Heart left ventricle (tissue), 16 donors: ENCODE measurements at regions of chr6 and their contacts with region 1.

Region 1: DNA sequence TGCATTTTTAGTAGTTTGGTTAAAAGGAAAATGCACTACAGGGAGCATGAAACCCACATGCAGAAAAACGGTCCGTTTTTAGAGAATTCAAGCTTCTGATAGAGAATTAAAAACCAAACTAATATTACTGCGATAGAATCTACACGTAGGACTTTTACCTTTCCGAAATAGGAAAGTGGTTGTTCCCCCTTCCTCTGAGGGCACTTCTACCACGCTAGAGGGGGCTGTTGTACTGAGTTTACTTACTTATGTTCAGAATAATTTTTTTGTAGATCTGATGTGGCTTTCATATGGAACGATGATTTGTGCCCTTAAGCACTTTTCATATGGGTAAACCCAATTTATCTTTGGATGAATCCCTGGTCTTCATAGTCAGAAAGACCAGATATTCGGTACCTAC is 264.3 kb upstream of the PLN start:
- DNase-seq: peak in 4 of 5 donors; percentile 30 to 50 (median 45)
- ATAC-seq: peak in 3 of 4 donors; percentile 46 to 68 (median 63)
- H3K4me3 ChIP-seq: peak overlapping the region in 2 of 12 donors; percentile 8 to 13
- H3K27ac ChIP-seq: peak overlapping the region in 3 of 12 donors; percentile 4 to 84 (median 77)
- H3K4me1 ChIP-seq: peaks cover 0 to 38% (median 8%) of the 10 kb centered on the region in 12 donors
- H3K27me3 ChIP-seq: no peaks in the 10 kb centered on the region
- CTCF ChIP-seq: peak; percentile 59 to 92 (median 82)
- POLR2A ChIP-seq: no peak

Region 2: DNA sequence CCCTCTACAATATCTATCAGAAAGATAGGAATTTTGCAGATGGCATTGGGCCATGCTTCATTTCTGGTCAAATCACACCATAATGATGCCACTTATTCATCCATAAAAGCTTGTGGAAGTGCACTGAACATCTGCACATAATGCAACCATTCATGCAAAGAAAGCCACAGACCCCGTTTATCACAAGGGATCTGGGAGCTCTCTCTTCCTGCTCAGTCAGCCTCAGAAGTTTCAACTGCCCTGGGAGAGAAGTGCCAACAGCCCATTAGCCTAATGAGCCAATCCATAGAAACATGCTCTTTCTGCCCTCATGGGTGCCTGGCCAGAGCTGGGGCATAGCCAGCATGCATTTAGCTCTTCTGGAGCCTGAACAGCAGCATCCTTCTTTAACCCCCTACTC is 290.9 kb before region 1 on chr6:
- intact Hi-C with region 1: no loop called
- DNase-seq: no peak
- ATAC-seq: no peak
- H3K4me3 ChIP-seq: no peak overlapping the region
- H3K27ac ChIP-seq: no peak overlapping the region
- H3K4me1 ChIP-seq: no peaks in the 10 kb centered on the region
- H3K27me3 ChIP-seq: no peaks in the 10 kb centered on the region
- CTCF ChIP-seq: no peak
- POLR2A ChIP-seq: no peak

Region 3: DNA sequence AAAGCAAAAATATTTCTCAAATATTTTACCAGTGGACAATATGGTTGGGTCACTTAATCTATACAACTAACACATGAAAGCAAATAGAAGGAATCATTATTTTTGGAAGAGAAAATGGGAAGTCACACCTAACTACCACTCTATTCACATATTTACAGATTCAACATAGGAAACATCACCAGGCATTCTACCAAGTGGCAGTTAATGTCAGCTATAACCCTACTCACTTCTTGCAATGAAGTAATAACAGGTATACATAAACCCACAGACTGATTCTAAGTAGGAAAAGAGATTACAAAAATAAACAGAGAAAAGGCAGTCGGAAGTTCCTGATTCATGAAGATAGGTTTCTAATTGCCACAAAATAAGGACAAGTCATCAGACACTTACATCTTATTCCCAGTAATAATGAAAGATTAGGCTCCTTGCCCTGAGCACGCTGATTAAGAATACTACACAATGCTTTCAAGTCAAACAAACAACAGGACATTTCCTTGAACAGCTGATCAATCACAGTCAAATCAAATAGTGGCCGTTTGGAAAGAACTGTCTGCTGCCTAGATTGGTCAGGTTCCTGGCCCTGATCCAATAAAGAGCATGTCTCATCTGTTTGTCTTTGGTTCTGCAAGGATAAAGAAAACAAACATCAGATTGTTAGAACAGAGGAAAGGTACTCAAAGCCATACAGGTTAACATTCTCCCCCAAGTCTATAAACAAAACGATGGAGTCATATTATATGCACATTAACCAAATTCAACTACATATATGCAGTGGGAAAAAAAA is 185.1 kb after region 1 on chr6:
- intact Hi-C with region 1: loop called in 1 of 10 experiments (anchors 5 kb)
- DNase-seq: no peak
- ATAC-seq: no peak
- H3K4me3 ChIP-seq: no peak overlapping the region
- H3K27ac ChIP-seq: no peak overlapping the region
- H3K4me1 ChIP-seq: peaks cover 0 to 31% (median 0%) of the 10 kb centered on the region in 12 donors
- H3K27me3 ChIP-seq: no peaks in the 10 kb centered on the region
- CTCF ChIP-seq: no peak
- POLR2A ChIP-seq: no peak

Region 4: GRCh38 chr6:118551063-118552053 is 267.6 kb after region 1 on chr6:
- intact Hi-C with region 1: loop called in 9 of 10 experiments (anchors 2 to 10 kb)
- DNase-seq: no peak
- ATAC-seq: peak; percentile 41 to 64 (median 64)
- H3K4me3 ChIP-seq: peak overlapping the region; percentile 27 to 64 (median 54)
- H3K27ac ChIP-seq: peak overlapping the region; percentile 27 to 87 (median 78)
- H3K4me1 ChIP-seq: peaks cover 0 to 14% (median 0%) of the 10 kb centered on the region in 12 donors
- H3K27me3 ChIP-seq: no peaks in the 10 kb centered on the region
- CTCF ChIP-seq: peak; percentile 31 to 77 (median 58)
- POLR2A ChIP-seq: no peak

Region 5: DNA sequence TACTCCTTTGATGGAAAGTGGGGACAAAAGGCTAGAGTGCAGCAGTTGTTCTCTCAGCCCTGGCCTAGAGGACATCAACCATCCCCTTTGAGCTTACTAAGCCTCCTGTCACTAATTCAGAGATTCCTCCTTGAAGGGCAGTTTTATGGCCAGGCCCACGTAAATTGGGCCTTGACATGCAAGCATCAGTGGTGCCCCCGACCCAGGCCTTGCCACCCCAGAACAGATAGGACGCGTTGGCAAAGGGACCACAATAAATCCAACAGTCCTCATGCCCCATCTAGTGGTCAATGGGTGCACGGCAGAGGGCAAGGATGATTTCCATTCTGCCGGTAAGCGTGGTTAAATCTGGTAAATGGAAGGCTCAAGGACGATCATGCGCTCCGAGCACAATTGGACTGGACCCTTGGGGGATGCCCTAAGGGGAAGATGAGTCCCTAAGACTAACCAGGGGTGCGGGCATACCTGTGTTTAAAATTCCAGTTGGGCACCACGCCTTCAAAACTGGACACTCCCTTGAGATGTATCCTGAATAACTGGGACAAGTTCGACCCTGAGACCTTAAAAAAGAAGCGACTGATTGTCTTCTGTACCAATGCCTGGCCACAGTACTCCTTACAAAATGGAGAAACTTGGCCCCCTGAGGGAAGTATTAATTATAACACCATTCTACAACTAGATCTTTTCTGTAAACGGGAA is 335.1 kb after region 1 on chr6:
- intact Hi-C with region 1: loop called in 8 of 10 experiments (anchors 2 to 5 kb)
- DNase-seq: peak in 4 of 5 donors; percentile 33 to 55 (median 53)
- ATAC-seq: peak; percentile 71 to 86 (median 83)
- H3K4me3 ChIP-seq: peak overlapping the region in 1 of 12 donors; percentile 14
- H3K27ac ChIP-seq: no peak overlapping the region
- H3K4me1 ChIP-seq: peaks cover 0 to 33% (median 11%) of the 10 kb centered on the region in 12 donors
- H3K27me3 ChIP-seq: no peaks in the 10 kb centered on the region
- CTCF ChIP-seq: peak; percentile 81 to 92 (median 88)
- POLR2A ChIP-seq: no peak

Region 6: GRCh38 chr6:118800394-118801071 is 516.8 kb after region 1 on chr6:
- intact Hi-C with region 1: loop called in 3 of 10 experiments (anchors 5 to 10 kb)
- DNase-seq: peak; percentile 65 to 80 (median 77)
- ATAC-seq: peak in 3 of 4 donors; percentile 84 to 92 (median 86)
- H3K4me3 ChIP-seq: peak overlapping the region in 3 of 12 donors; percentile 6 to 24 (median 13)
- H3K27ac ChIP-seq: no peak overlapping the region
- H3K4me1 ChIP-seq: peaks cover 0 to 11% (median 3%) of the 10 kb centered on the region in 12 donors
- H3K27me3 ChIP-seq: no peaks in the 10 kb centered on the region
- CTCF ChIP-seq: peak; percentile 77 to 96 (median 90)
- POLR2A ChIP-seq: no peak